Activated naive CD4-positive, alpha-beta T cell treated with anti-CD3 and anti-CD28 coated beads for 36 hours (primary cell): ENCODE measurements at regions of chr5 and their contacts with region 1.

Region 1: GRCh38 chr5:179060116-179061008 is at the start of gene ZNF354C:
- DNase-seq: peak; percentile 90
- H3K4me3 Mint-ChIP-seq: peak within 1 kb of the TSS; percentile 87
- H3K27ac Mint-ChIP-seq: peak within 1 kb of the TSS; percentile 81
- H3K4me1 Mint-ChIP-seq: peaks cover 15% of the 10 kb centered on the region
- H3K27me3 Mint-ChIP-seq: no peaks in the 10 kb centered on the region
- total RNA-seq, gene ZNF354C: 5.8 to 6.1 TPM

Region 2: GRCh38 chr5:178551059-178551458 is 509.3 kb before region 1 on chr5:
- CTCF ChIA-PET with region 1: no interaction called
- intact Hi-C with region 1: no loop called
- DNase-seq: no peak
- H3K4me3 Mint-ChIP-seq: no peak overlapping the region
- H3K27ac Mint-ChIP-seq: no peak overlapping the region
- H3K4me1 Mint-ChIP-seq: no peaks in the 10 kb centered on the region
- H3K27me3 Mint-ChIP-seq: no peaks in the 10 kb centered on the region

Region 3: DNA sequence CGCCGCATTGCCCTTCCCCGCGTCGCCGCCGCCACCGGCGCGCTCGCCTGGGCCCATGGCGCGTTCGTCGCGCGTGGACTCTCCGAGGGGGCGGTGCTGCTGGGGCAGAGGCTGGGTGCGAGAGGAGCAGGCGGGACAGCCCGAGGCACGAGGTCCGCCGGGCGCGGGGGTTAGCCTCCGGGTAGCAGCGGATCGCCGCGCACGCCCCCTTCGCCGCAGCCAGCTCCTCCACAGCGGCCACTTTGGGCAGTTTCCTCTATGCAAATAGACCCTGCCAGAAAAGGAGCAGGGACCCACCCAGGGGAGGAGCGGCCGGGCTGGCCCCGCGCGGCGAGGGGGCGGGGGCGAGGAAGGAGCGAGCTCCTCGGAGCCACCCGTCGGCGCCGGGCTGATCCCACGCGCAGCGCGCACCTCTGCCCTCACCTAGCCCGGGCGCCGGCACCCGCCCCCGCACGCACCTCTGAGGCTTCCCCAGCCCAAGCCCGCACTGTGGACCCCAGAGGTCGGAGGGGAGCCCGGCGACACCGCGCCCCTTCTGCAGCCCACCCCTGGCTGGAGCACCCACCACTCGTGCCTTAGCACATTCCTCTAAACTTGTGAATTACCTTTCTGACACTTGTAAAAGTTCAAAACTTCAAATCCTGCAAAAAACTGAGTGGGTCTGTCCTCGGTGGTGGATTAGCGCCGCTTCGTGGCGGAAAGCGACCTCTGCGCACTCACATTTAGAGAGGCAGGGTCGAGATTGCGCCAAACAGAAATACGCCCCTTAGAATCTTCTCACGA is 470.0 kb before region 1 on chr5 and contains the start of gene COL23A1:
- CTCF ChIA-PET with region 1: no interaction called
- intact Hi-C with region 1: no loop called
- DNase-seq: peak; percentile 63
- H3K4me3 Mint-ChIP-seq: peak within 1 kb of the TSS; percentile 57
- H3K27ac Mint-ChIP-seq: no peak within 1 kb of the TSS
- H3K4me1 Mint-ChIP-seq: peaks cover 7% of the 10 kb centered on the region
- H3K27me3 Mint-ChIP-seq: peaks cover 45% of the 10 kb centered on the region
- total RNA-seq, gene COL23A1: 0.07 TPM in 1 of 2 experiments, not detected in the other

Region 4: DNA sequence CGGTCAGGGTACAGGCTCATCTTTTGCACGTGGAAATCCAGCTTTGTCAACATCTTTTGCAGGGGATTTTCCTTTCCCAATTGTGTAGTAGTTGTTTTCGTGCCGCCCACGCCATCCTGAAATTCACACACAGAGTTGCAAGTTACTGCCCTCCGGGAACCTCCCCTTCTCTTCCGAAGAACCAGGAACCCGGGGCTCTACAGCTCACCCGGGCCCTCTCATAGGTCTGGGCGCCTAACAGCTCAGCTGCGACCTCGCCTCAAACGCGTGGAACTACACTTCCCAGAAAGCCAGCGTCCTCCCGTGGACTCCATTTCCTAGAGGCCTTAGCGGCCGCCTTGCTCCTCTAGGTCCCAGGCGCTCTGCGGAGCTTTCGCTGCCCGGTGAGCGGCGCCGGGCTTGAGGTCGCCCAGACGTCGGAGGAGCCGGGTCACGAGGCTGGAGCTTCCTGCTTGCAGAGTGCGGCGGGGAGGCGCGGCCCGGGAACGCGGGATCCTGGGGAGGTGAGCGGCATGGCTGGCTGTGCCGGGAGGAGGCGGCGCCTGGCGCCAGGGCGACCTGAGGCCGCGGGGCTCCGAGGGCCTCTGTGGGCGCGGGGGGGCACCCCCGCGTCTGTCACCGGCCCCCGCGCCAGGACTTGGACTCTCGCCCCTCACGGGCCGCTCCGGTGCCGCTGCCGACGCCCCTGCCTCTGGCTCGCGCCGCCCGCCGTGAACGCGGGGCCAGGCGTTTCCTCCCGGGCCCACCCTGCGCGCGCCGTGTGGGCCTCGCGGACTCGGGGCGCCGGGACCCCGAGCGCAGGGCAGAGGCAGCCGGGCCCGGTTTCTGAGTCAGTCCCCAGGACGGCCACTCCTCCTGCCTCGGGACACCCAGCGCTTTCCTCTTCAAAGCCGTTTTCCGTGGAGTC is 200.5 kb before region 1 on chr5 and contains the start of gene ZNF354B:
- CTCF ChIA-PET with region 1: no interaction called
- intact Hi-C with region 1: loop called (anchors 1 kb)
- DNase-seq: peak; percentile 91
- H3K4me3 Mint-ChIP-seq: peak within 1 kb of the TSS; percentile 89
- H3K27ac Mint-ChIP-seq: peak within 1 kb of the TSS; percentile 66
- H3K4me1 Mint-ChIP-seq: peaks cover 21% of the 10 kb centered on the region
- H3K27me3 Mint-ChIP-seq: no peaks in the 10 kb centered on the region
- total RNA-seq, gene ZNF354B: 8.6 to 8.9 TPM

Region 5: DNA sequence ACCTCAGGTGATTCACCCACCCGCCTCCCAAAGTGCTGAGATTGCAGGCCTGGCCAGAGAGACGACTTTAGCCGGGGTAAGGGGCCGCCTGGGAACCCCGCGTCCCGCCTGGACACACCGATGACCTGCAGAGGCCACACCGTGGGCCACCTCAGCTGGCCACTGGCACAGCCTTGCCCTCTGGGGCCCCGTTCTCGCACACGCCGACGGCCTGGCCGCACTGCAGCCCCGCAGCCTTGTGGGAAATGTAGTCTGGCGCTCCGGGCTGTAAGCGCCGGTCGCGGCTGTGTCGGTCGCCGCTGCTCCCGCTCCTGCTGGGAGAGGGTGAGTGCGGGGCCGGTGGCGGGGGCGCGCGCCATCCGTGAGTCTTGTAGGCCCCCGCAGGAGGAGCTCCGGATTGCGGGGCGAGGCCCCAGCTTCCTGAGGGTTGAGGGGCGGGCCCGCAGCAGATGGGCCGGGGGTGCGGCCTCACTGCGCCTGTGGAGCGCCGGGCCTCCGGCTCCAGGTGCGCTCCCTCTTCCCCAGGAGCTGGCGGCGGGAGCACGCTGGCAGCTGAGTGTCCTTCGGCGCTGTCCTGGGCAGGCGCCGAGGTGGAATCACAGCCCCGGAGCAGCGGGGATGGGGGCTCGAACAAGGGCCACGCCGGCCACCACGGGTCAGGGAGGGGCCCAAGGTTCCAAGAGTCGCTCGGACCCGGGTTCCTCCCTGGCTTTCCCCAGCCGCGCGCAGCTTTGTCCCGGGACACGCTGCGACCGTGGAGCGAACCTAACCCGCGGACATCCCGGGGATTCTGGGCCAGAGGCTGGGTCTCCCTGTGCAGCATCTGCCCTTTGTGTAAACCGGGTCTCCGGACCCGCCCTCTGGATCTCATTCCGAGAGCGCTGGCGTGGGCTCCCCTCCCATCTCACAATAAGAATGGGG is 164.5 kb before region 1 on chr5 and contains the start of gene ZFP2:
- CTCF ChIA-PET with region 1: no interaction called
- intact Hi-C with region 1: loop called (anchors 2 kb)
- DNase-seq: peak; percentile 48
- H3K4me3 Mint-ChIP-seq: peak within 1 kb of the TSS; percentile 71
- H3K27ac Mint-ChIP-seq: no peak within 1 kb of the TSS
- H3K4me1 Mint-ChIP-seq: peaks cover 5% of the 10 kb centered on the region
- H3K27me3 Mint-ChIP-seq: no peaks in the 10 kb centered on the region
- total RNA-seq, gene ZFP2: 0.17 to 0.26 TPM

Region 6: GRCh38 chr5:179023528-179024430 is 36.6 kb before region 1 on chr5 and contains the start of gene ZNF879:
- CTCF ChIA-PET with region 1: interaction called, 3 read pairs
- intact Hi-C with region 1: loop called (anchors 1 kb)
- DNase-seq: peak; percentile 95
- H3K4me3 Mint-ChIP-seq: peak within 1 kb of the TSS; percentile 97
- H3K27ac Mint-ChIP-seq: peak within 1 kb of the TSS; percentile 90
- H3K4me1 Mint-ChIP-seq: peaks cover 7% of the 10 kb centered on the region
- H3K27me3 Mint-ChIP-seq: peaks cover 1% of the 10 kb centered on the region
- total RNA-seq, gene ZNF879: 1.8 to 2.0 TPM

Region 7: DNA sequence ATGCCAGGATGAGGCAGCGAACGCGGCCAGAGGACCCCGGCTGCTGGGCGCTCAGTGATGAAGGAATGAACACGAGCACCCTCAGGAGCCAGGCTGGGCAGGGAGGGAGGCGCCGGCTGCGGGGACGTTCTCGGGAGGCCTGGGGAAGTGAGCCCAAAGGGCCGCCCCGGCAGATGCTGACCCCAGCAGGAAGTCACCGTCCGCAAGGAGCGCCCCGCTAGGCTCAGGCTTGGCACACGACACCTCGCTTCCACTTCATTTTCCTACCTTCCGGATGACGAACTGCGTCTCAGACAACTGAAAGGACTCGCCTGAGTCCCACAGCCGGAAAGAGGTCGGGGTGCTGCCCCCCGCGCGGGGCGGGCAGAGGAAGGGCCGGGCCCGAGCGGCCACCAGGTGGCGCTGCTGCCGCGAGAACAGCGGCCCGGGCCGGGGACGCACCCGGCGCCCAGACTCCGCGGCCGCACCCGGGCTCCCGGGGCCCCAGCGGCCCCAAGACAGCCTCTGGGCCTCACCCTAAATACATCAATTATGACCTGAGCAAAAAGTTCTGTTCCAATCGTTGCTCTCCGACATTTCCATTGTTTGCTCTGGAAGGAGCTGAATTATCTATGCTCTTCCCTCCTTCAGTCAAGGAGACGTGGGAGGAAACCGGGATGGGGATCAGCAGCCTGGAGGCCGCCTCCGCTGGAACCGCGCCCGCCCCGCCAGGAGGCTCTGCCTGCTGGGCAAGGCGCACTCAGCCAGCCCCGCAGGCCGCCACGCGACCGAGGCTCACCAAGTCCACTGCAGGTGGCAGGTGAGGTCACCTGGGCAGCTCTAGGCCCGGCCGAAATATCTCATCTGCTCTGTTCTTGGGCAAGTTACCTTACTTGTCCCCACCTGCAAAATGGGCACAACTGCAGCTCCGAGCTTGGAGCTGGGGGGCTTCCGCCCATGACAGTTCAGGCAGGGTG is 106.8 kb after region 1 on chr5:
- CTCF ChIA-PET with region 1: no interaction called
- intact Hi-C with region 1: loop called (anchors 1 kb)
- DNase-seq: peak; percentile 76
- H3K4me3 Mint-ChIP-seq: no peak overlapping the region
- H3K27ac Mint-ChIP-seq: no peak overlapping the region
- H3K4me1 Mint-ChIP-seq: peaks cover 3% of the 10 kb centered on the region
- H3K27me3 Mint-ChIP-seq: peaks cover 5% of the 10 kb centered on the region